CD4-positive, alpha-beta memory T cell (primary cell): ENCODE measurements at regions of chr16 and their contacts with region 1.

Region 1: GRCh38 chr16:68528686-68529379 is 10.3 kb upstream of the ZFP90 start:
- DNase-seq: peak; percentile 85 to 89 (median 87)
- H3K4me3 ChIP-seq: no peak overlapping the region
- H3K4me3 Mint-ChIP-seq: peak overlapping the region; percentile 76 to 94 (median 90)
- H3K27ac ChIP-seq: no peak overlapping the region
- H3K27ac Mint-ChIP-seq: peak overlapping the region; percentile 52 to 95 (median 86)
- H3K4me1 ChIP-seq: peaks cover 21% of the 10 kb centered on the region
- H3K4me1 Mint-ChIP-seq: peaks cover 12 to 26% (median 21%) of the 10 kb centered on the region in 4 donors
- H3K27me3 ChIP-seq: no peaks in the 10 kb centered on the region
- H3K27me3 Mint-ChIP-seq: no peaks in the 10 kb centered on the region

Region 2: DNA sequence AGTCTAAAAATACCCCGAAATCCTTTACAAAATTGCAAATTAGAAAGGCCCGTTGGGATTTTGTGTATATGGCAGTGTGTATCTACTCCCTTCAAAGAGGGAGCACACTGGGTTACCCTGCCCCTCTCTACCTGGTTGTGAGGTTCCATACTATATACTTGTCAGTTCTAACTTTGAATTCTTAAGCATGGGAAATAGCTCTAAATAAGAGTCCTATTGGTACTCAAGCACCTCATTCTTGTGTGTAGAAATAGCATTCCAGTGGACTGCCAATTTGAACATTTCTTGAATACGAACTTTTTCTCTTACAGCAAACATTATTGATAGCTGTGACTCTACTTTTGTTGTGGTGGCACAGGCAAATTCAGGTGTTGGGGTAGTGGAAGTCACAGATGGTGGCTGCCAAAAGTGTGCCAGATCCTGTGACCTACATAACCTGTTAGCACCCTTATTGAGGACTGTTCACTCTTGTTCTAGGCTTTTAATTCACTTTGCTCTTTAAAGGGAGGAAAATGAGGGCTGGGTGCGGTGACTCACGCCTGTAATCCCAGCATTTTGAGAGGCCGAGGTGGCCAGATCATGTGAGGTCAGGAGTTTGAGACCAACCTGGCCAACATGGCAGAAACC is 309.0 kb before region 1 on chr16:
- CTCF ChIA-PET with region 1: no interaction called
- POLR2A ChIA-PET with region 1: no interaction called
- intact Hi-C with region 1: no loop called
- DNase-seq: no peak
- H3K4me3 ChIP-seq: no peak overlapping the region
- H3K4me3 Mint-ChIP-seq: peak overlapping the region in 1 of 8 donors; percentile 15
- H3K27ac ChIP-seq: no peak overlapping the region
- H3K27ac Mint-ChIP-seq: peak overlapping the region in 3 of 7 donors; percentile 55 to 87 (median 63)
- H3K4me1 ChIP-seq: peaks cover 3% of the 10 kb centered on the region
- H3K4me1 Mint-ChIP-seq: peaks cover 8 to 20% (median 13%) of the 10 kb centered on the region in 4 donors
- H3K27me3 ChIP-seq: no peaks in the 10 kb centered on the region
- H3K27me3 Mint-ChIP-seq: no peaks in the 10 kb centered on the region

Region 3: GRCh38 chr16:68328151-68328859 is 200.5 kb before region 1 on chr16:
- CTCF ChIA-PET with region 1: no interaction called
- POLR2A ChIA-PET with region 1: no interaction called
- intact Hi-C with region 1: no loop called
- DNase-seq: peak; percentile 77 to 83 (median 78)
- H3K4me3 ChIP-seq: no peak overlapping the region
- H3K4me3 Mint-ChIP-seq: no peak overlapping the region
- H3K27ac ChIP-seq: no peak overlapping the region
- H3K27ac Mint-ChIP-seq: peak overlapping the region; percentile 5 to 88 (median 19)
- H3K4me1 ChIP-seq: peaks cover 16% of the 10 kb centered on the region
- H3K4me1 Mint-ChIP-seq: peaks cover 8 to 19% (median 14%) of the 10 kb centered on the region in 4 donors
- H3K27me3 ChIP-seq: no peaks in the 10 kb centered on the region
- H3K27me3 Mint-ChIP-seq: no peaks in the 10 kb centered on the region

Region 4: DNA sequence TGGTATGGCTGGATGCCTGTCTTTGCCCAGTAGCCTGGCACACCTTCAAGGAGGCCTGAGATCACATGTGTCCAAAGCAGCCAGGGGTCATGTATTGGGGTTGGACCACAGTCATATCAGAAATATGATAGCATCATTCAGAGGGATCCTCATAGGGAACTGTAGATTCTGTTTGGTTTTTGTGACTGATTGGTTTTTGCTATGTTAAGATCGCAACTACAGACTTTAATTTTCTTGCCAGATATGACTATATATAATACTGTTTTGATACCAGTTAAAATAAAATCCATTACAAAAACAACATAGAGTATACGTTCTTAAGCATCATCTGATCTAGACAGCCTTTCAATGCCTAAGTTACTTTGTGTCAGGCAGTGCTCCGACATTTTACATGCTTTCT is 68.8 kb before region 1 on chr16:
- CTCF ChIA-PET with region 1: no interaction called
- POLR2A ChIA-PET with region 1: no interaction called
- intact Hi-C with region 1: no loop called
- DNase-seq: no peak
- H3K4me3 ChIP-seq: no peak overlapping the region
- H3K4me3 Mint-ChIP-seq: no peak overlapping the region
- H3K27ac ChIP-seq: no peak overlapping the region
- H3K27ac Mint-ChIP-seq: no peak overlapping the region
- H3K4me1 ChIP-seq: no peaks in the 10 kb centered on the region
- H3K4me1 Mint-ChIP-seq: peaks cover 0 to 1% (median 0%) of the 10 kb centered on the region in 4 donors
- H3K27me3 ChIP-seq: no peaks in the 10 kb centered on the region
- H3K27me3 Mint-ChIP-seq: peaks cover 5 to 6% of the 10 kb centered on the region in 2 donors

Region 5: GRCh38 chr16:68490829-68491575 is 37.8 kb before region 1 on chr16:
- CTCF ChIA-PET with region 1: no interaction called
- POLR2A ChIA-PET with region 1: no interaction called
- intact Hi-C with region 1: no loop called
- DNase-seq: no peak
- H3K4me3 ChIP-seq: no peak overlapping the region
- H3K4me3 Mint-ChIP-seq: no peak overlapping the region
- H3K27ac ChIP-seq: no peak overlapping the region
- H3K27ac Mint-ChIP-seq: no peak overlapping the region
- H3K4me1 ChIP-seq: no peaks in the 10 kb centered on the region
- H3K4me1 Mint-ChIP-seq: peaks cover 0 to 4% (median 0%) of the 10 kb centered on the region in 4 donors
- H3K27me3 ChIP-seq: no peaks in the 10 kb centered on the region
- H3K27me3 Mint-ChIP-seq: peaks cover 0 to 1% of the 10 kb centered on the region in 2 donors

Region 6: DNA sequence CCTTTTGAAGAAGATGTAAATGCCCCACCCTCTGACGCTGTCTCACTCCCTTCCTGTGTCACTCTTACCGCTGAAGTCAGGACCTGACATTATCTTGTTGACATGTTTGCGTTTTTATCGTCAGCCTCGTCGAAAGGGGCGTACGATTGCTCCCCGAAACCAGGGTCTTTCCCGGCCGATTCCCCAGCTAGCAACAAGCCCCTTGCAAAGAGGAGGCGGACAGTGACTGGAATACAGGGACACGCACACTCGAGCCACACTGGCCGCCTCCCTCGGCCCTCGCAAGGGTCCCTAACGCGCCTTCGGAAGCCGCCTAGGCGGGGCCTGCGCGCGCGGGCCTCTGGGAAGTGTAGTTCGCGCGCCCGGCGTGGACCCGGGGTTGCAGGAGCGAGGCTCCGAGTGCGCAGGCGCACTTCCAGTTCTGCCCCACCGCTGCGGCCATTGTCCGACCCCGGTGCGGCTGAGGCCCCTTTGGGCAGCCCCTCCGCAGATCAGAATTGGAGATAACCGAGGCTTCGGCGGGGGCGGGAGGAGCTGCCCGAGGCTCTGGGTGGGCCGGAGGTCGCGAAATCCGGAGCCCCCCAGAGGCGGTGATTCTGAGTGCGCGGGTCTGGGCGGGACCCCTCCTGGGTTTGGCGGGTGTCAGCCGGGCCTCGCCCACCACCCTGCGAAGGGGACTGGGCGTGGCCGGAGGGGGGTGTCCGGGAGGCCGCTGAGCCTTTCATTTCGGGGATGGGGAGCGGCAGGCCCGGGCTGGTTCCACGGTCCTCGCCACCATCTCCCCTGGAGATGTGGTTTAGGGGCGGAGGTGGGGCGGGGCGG is 10.3 kb after region 1 on chr16 and contains the start of gene ZFP90:
- CTCF ChIA-PET with region 1: interaction called, 25 read pairs
- POLR2A ChIA-PET with region 1: interaction called, 54 read pairs
- intact Hi-C with region 1: loop called (anchors 1 kb)
- DNase-seq: peak; percentile 85 to 89 (median 88)
- H3K4me3 ChIP-seq: peak within 1 kb of the TSS; percentile 63 to 87
- H3K4me3 Mint-ChIP-seq: peak within 1 kb of the TSS; percentile 92 to 99 (median 96)
- H3K27ac ChIP-seq: peak within 1 kb of the TSS; percentile 83
- H3K27ac Mint-ChIP-seq: peak within 1 kb of the TSS; percentile 95 to 100 (median 100)
- H3K4me1 ChIP-seq: peaks cover 17% of the 10 kb centered on the region
- H3K4me1 Mint-ChIP-seq: peaks cover 14 to 33% (median 23%) of the 10 kb centered on the region in 4 donors
- H3K27me3 ChIP-seq: no peaks in the 10 kb centered on the region
- H3K27me3 Mint-ChIP-seq: no peaks in the 10 kb centered on the region
- total RNA-seq, gene ZFP90: 53.6 to 55.3 TPM

Region 7: GRCh38 chr16:68590201-68590994 is 61.6 kb after region 1 on chr16:
- CTCF ChIA-PET with region 1: interaction called, 61 read pairs
- POLR2A ChIA-PET with region 1: no interaction called
- intact Hi-C with region 1: loop called (anchors 2 kb)
- DNase-seq: peak; percentile 22 to 42 (median 33)
- H3K4me3 ChIP-seq: no peak overlapping the region
- H3K4me3 Mint-ChIP-seq: peak overlapping the region in 6 of 8 donors; percentile 29 to 73 (median 49)
- H3K27ac ChIP-seq: no peak overlapping the region
- H3K27ac Mint-ChIP-seq: no peak overlapping the region
- H3K4me1 ChIP-seq: no peaks in the 10 kb centered on the region
- H3K4me1 Mint-ChIP-seq: peaks cover 0 to 4% (median 3%) of the 10 kb centered on the region in 4 donors
- H3K27me3 ChIP-seq: no peaks in the 10 kb centered on the region
- H3K27me3 Mint-ChIP-seq: peaks cover 1% of the 10 kb centered on the region in 2 donors

Region 8: DNA sequence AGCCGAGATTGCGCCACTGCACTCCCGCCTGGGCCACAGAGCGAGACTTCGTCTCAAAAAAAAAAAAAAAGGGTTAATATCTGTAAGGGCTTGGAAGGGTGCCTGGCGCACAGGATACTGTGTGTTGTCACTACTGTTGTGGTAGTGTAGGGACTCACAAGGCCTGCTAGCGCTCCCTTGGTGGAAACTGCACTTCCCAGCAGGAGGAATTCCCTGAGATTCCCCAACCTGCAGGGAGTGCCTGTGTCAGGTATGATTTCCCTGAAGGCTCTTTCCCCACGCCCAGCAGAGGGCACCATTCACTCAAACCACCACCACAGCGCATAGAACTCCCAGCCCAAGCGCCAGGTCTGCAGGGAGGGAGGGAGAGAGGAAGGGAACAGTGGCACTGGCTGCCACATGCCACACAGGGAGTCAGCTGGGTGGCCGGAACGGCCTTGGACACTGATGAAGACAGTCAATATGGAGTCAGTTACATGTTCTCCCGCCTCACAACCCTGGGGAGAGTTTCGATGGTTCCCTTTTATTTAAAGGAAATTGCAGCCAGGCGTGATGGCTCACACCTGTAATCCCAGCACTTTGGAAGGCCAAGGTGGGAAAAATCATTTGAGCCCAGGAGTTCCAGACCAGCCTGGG is 175.5 kb after region 1 on chr16:
- CTCF ChIA-PET with region 1: no interaction called
- POLR2A ChIA-PET with region 1: no interaction called
- intact Hi-C with region 1: loop called (anchors 2 kb)
- DNase-seq: peak in 4 of 5 donors; percentile 17 to 41 (median 22)
- H3K4me3 ChIP-seq: no peak overlapping the region
- H3K4me3 Mint-ChIP-seq: no peak overlapping the region
- H3K27ac ChIP-seq: no peak overlapping the region
- H3K27ac Mint-ChIP-seq: no peak overlapping the region
- H3K4me1 ChIP-seq: no peaks in the 10 kb centered on the region
- H3K4me1 Mint-ChIP-seq: peaks cover 0 to 3% (median 0%) of the 10 kb centered on the region in 4 donors
- H3K27me3 ChIP-seq: no peaks in the 10 kb centered on the region
- H3K27me3 Mint-ChIP-seq: peaks cover 3 to 7% of the 10 kb centered on the region in 2 donors

Region 9: DNA sequence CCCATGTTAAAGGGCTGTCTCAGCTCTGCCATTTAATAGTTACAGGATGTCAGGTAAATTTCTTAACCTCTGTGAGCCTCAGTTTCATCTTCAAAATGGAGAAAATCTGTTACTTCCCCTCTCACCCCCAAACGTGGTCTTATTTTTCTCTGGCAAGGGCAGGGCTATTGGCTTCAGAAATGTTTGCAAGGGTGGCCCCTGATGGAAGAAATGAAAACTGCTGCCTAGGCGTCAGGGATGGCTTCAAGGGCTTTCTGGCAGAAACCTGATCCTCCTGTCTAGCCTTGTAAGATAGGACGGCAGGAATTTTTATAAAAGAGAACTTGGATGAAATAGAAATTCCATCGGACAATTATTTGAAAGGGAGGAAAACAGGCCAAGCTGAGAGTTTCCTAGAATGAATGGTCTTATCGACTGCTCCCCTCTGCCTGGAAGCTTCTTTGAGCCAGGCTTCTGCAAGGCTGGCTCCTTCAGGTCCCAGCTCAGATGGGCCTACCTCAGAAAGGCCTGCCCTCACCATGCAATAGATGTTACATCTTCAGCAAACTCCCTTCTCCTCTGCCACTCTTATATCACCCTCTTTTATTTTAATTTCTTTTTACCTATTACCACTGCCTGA is 271.5 kb after region 1 on chr16:
- CTCF ChIA-PET with region 1: interaction called, 26 read pairs
- POLR2A ChIA-PET with region 1: no interaction called
- intact Hi-C with region 1: loop called (anchors 1 kb)
- DNase-seq: peak in 4 of 5 donors; percentile 13 to 33 (median 18)
- H3K4me3 ChIP-seq: no peak overlapping the region
- H3K4me3 Mint-ChIP-seq: no peak overlapping the region
- H3K27ac ChIP-seq: no peak overlapping the region
- H3K27ac Mint-ChIP-seq: peak overlapping the region in 1 of 7 donors; percentile 55
- H3K4me1 ChIP-seq: no peaks in the 10 kb centered on the region
- H3K4me1 Mint-ChIP-seq: no peaks in the 10 kb centered on the region
- H3K27me3 ChIP-seq: no peaks in the 10 kb centered on the region
- H3K27me3 Mint-ChIP-seq: no peaks in the 10 kb centered on the region

Region 10: GRCh38 chr16:68843482-68844210 is 314.8 kb after region 1 on chr16 and contains the start of gene TANGO6:
- CTCF ChIA-PET with region 1: interaction called, 14 read pairs
- POLR2A ChIA-PET with region 1: no interaction called
- intact Hi-C with region 1: loop called (anchors 1 kb)
- DNase-seq: peak; percentile 86 to 90 (median 88)
- H3K4me3 ChIP-seq: peak within 1 kb of the TSS; percentile 84 to 94
- H3K4me3 Mint-ChIP-seq: peak within 1 kb of the TSS; percentile 86 to 97 (median 95)
- H3K27ac ChIP-seq: peak within 1 kb of the TSS; percentile 71
- H3K27ac Mint-ChIP-seq: peak within 1 kb of the TSS; percentile 67 to 96 (median 94)
- H3K4me1 ChIP-seq: peaks cover 25% of the 10 kb centered on the region
- H3K4me1 Mint-ChIP-seq: peaks cover 16 to 35% (median 26%) of the 10 kb centered on the region in 4 donors
- H3K27me3 ChIP-seq: no peaks in the 10 kb centered on the region
- H3K27me3 Mint-ChIP-seq: peaks cover 0 to 1% of the 10 kb centered on the region in 2 donors
- total RNA-seq, gene TANGO6: 35.5 to 38.1 TPM

Region 11: DNA sequence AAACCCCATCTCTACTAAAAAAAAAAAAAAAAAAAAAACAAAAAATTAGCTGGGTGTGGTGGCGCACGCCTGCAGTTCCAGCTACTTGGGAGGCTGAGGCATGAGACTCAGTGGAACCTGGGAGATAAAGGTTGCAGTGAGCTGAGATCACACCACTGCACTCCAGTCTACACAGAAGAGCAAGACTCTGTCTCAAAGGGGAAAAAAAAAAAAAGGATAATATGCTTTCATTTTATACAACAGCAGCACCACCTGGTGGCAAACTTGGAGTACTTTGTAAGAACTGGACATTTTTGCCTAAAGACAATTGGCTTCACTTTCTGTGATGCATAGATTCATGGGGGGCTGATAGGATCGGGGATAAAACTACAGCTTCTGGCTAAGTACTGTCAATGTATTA is 595.1 kb after region 1 on chr16:
- CTCF ChIA-PET with region 1: interaction called, 35 read pairs
- POLR2A ChIA-PET with region 1: interaction called, 3 read pairs
- intact Hi-C with region 1: loop called (anchors 1 kb)
- DNase-seq: peak; percentile 64 to 75 (median 71)
- H3K4me3 ChIP-seq: no peak overlapping the region
- H3K4me3 Mint-ChIP-seq: no peak overlapping the region
- H3K27ac ChIP-seq: no peak overlapping the region
- H3K27ac Mint-ChIP-seq: peak overlapping the region in 4 of 7 donors; percentile 12 to 87 (median 64)
- H3K4me1 ChIP-seq: no peaks in the 10 kb centered on the region
- H3K4me1 Mint-ChIP-seq: peaks cover 14 to 38% (median 20%) of the 10 kb centered on the region in 4 donors
- H3K27me3 ChIP-seq: no peaks in the 10 kb centered on the region
- H3K27me3 Mint-ChIP-seq: no peaks in the 10 kb centered on the region